Activated CD4-positive, alpha-beta memory T cell treated with anti-CD3 and anti-CD28 coated beads for 36 hours (primary cell): ENCODE measurements at regions of chr11 and their contacts with region 1.

Region 1: GRCh38 chr11:14358729-14359439 is at the start of gene RRAS2:
- DNase-seq: peak; percentile 83
- H3K4me3 Mint-ChIP-seq: peak within 1 kb of the TSS; percentile 92
- H3K27ac Mint-ChIP-seq: peak within 1 kb of the TSS; percentile 81
- H3K4me1 Mint-ChIP-seq: peaks cover 32% of the 10 kb centered on the region
- H3K27me3 Mint-ChIP-seq: no peaks in the 10 kb centered on the region
- total RNA-seq, gene RRAS2: 37.7 to 39.5 TPM

Region 2: GRCh38 chr11:14223636-14224288 is 135.1 kb before region 1 on chr11:
- CTCF ChIA-PET with region 1: no interaction called
- POLR2A ChIA-PET with region 1: no interaction called
- intact Hi-C with region 1: no loop called
- DNase-seq: no peak
- H3K4me3 Mint-ChIP-seq: no peak overlapping the region
- H3K27ac Mint-ChIP-seq: no peak overlapping the region
- H3K4me1 Mint-ChIP-seq: no peaks in the 10 kb centered on the region
- H3K27me3 Mint-ChIP-seq: no peaks in the 10 kb centered on the region

Region 3: GRCh38 chr11:14342906-14343305 is 16.0 kb before region 1 on chr11:
- CTCF ChIA-PET with region 1: interaction called, 3 read pairs
- POLR2A ChIA-PET with region 1: no interaction called
- intact Hi-C with region 1: loop called (anchors 2 kb)
- DNase-seq: no peak
- H3K4me3 Mint-ChIP-seq: no peak overlapping the region
- H3K27ac Mint-ChIP-seq: no peak overlapping the region
- H3K4me1 Mint-ChIP-seq: peaks cover 48% of the 10 kb centered on the region
- H3K27me3 Mint-ChIP-seq: no peaks in the 10 kb centered on the region

Region 4: GRCh38 chr11:14374922-14375830 is 16.3 kb after region 1 on chr11:
- CTCF ChIA-PET with region 1: no interaction called
- POLR2A ChIA-PET with region 1: no interaction called
- intact Hi-C with region 1: loop called (anchors 1 kb)
- DNase-seq: peak; percentile 33
- H3K4me3 Mint-ChIP-seq: no peak overlapping the region
- H3K27ac Mint-ChIP-seq: peak overlapping the region; percentile 59
- H3K4me1 Mint-ChIP-seq: peaks cover 38% of the 10 kb centered on the region
- H3K27me3 Mint-ChIP-seq: peaks cover 8% of the 10 kb centered on the region

Region 5: GRCh38 chr11:14471127-14471526 is 112.2 kb after region 1 on chr11:
- CTCF ChIA-PET with region 1: no interaction called
- POLR2A ChIA-PET with region 1: no interaction called
- intact Hi-C with region 1: no loop called
- DNase-seq: no peak
- H3K4me3 Mint-ChIP-seq: no peak overlapping the region
- H3K27ac Mint-ChIP-seq: peak overlapping the region; percentile 35
- H3K4me1 Mint-ChIP-seq: peaks cover 48% of the 10 kb centered on the region
- H3K27me3 Mint-ChIP-seq: no peaks in the 10 kb centered on the region

Region 6: GRCh38 chr11:14499554-14500180 is 140.8 kb after region 1 on chr11 and contains the start of gene COPB1:
- CTCF ChIA-PET with region 1: no interaction called
- POLR2A ChIA-PET with region 1: no interaction called
- intact Hi-C with region 1: loop called (anchors 5 kb)
- DNase-seq: peak; percentile 96
- H3K4me3 Mint-ChIP-seq: peak within 1 kb of the TSS; percentile 96
- H3K27ac Mint-ChIP-seq: peak within 1 kb of the TSS; percentile 97
- H3K4me1 Mint-ChIP-seq: peaks cover 42% of the 10 kb centered on the region
- H3K27me3 Mint-ChIP-seq: no peaks in the 10 kb centered on the region
- total RNA-seq, gene COPB1: 107 to 108 TPM